ENCODE measurements at regions of chr21 and their contacts with region 1.

Region 1: GRCh38 chr21:25370311-25370744 is 237.0 kb downstream of the MRPL39 start:
- DNase-seq: peak; percentile 99
- ATAC-seq: peak; percentile 96
- H3K4me3 ChIP-seq: no peak overlapping the region
- H3K27ac ChIP-seq: peak overlapping the region; percentile 70
- H3K4me1 ChIP-seq: peaks cover 15% of the 10 kb centered on the region
- H3K27me3 ChIP-seq: no peaks in the 10 kb centered on the region
- CTCF ChIP-seq: no peak
- POLR2A ChIP-seq: 0 out of 2 replicates have a peak, but pooled peaks have one; percentile 30
- RAD21 ChIP-seq: no peak

Region 2: GRCh38 chr21:24895885-24896734 is 474.2 kb before region 1 on chr21:
- CTCF ChIA-PET with region 1: no interaction called
- POLR2A ChIA-PET with region 1: no interaction called
- dilution Hi-C with region 1: no loop called
- in situ Hi-C with region 1: loop called (anchors 10 kb)
- intact Hi-C with region 1: no loop called
- DNase-seq: peak; percentile 25
- ATAC-seq: peak; percentile 66; the same call in 1 of the 2 replicates
- H3K4me3 ChIP-seq: no peak overlapping the region
- H3K27ac ChIP-seq: no peak overlapping the region
- H3K4me1 ChIP-seq: no peaks in the 10 kb centered on the region
- H3K27me3 ChIP-seq: no peaks in the 10 kb centered on the region
- CTCF ChIP-seq: peak; percentile 43
- POLR2A ChIP-seq: no peak
- RAD21 ChIP-seq: peak; percentile 64

Region 3: GRCh38 chr21:25412100-25412499 is 41.8 kb after region 1 on chr21:
- CTCF ChIA-PET with region 1: no interaction called
- POLR2A ChIA-PET with region 1: no interaction called
- dilution Hi-C with region 1: no loop called
- in situ Hi-C with region 1: no loop called
- intact Hi-C with region 1: no loop called
- DNase-seq: peak; percentile 15
- ATAC-seq: no peak; the same call in 1 of the 2 replicates
- H3K4me3 ChIP-seq: no peak overlapping the region
- H3K27ac ChIP-seq: no peak overlapping the region
- H3K4me1 ChIP-seq: no peaks in the 10 kb centered on the region
- H3K27me3 ChIP-seq: no peaks in the 10 kb centered on the region
- CTCF ChIP-seq: no peak
- POLR2A ChIP-seq: no peak
- RAD21 ChIP-seq: no peak